CD8-positive, alpha-beta T cell (primary cell): ENCODE measurements at regions of chr6 and their contacts with region 1.

Region 1: DNA sequence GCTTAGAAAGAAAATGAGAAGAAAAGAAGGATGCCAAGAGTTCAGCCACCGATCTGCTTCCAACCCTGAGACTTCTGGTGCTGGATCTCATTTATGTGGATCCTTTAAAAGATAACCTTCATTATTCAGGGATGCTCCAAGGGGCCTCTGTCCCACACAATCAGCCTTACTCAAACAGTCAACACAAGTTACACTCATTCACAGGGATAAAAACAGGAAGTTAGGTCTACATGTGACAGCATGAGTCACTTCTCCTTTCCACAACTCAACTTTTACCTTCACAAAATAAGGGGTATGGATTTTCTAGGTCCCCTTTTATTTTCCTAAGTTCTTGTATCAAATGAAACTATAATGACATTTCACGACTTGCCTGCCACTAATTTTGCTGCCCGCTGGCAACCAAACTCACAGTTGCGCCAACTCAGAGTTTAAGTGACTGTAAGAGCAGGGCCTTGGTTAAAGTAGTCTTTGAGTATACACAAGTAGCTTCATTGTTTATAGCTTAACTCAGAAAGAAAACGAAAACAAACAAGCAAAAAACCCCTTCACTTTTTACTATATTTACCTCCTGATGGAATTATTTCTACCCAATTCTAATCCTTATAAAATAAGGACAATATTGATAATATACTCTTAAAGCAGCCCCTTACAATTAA is 278.8 kb upstream of the RUNX2 start:
- DNase-seq: peak in 1 of 9 experiments; percentile 27
- ATAC-seq: no peak
- H3K4me3 ChIP-seq: no peak overlapping the region
- H3K4me3 Mint-ChIP-seq: no peak overlapping the region
- H3K27ac ChIP-seq: no peak overlapping the region
- H3K27ac Mint-ChIP-seq: peak overlapping the region; percentile 53
- H3K4me1 ChIP-seq: peaks cover 6% of the 10 kb centered on the region
- H3K4me1 Mint-ChIP-seq: peaks cover 42% of the 10 kb centered on the region
- H3K27me3 ChIP-seq: no peaks in the 10 kb centered on the region
- H3K27me3 Mint-ChIP-seq: no peaks in the 10 kb centered on the region
- CTCF ChIP-seq: no peak

Region 2: DNA sequence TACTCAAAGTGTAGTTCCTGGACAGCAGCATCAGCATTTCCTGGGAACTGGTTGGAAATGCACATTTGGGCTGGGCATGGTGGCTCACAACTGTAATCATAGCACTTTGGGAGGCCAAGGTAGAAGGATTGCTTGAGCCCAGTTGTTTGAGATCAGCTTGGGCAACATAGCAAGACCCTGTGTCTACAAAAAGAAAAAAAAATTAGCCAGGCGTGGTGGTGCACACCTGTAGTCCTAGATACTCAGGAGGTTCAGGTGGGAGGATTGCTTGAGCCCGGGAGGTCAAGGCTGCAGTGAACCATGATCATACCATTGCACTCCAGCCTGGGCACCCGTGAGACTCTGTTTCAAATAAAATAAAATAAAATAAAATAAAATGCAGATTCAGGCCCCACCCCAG is 505.7 kb before region 1 on chr6:
- CTCF ChIA-PET with region 1: no interaction called
- POLR2A ChIA-PET with region 1: no interaction called
- intact Hi-C with region 1: no loop called
- DNase-seq: no peak
- ATAC-seq: no peak
- H3K4me3 ChIP-seq: no peak overlapping the region
- H3K4me3 Mint-ChIP-seq: no peak overlapping the region
- H3K27ac ChIP-seq: no peak overlapping the region
- H3K27ac Mint-ChIP-seq: no peak overlapping the region
- H3K4me1 ChIP-seq: no peaks in the 10 kb centered on the region
- H3K4me1 Mint-ChIP-seq: no peaks in the 10 kb centered on the region
- H3K27me3 ChIP-seq: no peaks in the 10 kb centered on the region
- H3K27me3 Mint-ChIP-seq: no peaks in the 10 kb centered on the region
- CTCF ChIP-seq: no peak

Region 3: GRCh38 chr6:44932651-44933091 is 116.6 kb before region 1 on chr6:
- CTCF ChIA-PET with region 1: no interaction called
- POLR2A ChIA-PET with region 1: no interaction called
- intact Hi-C with region 1: no loop called
- DNase-seq: peak; percentile 28 to 87 (median 63)
- ATAC-seq: peak; percentile 79
- H3K4me3 ChIP-seq: peak overlapping the region; percentile 33 to 53
- H3K4me3 Mint-ChIP-seq: peak overlapping the region; percentile 87
- H3K27ac ChIP-seq: peak overlapping the region; percentile 74 to 81
- H3K27ac Mint-ChIP-seq: peak overlapping the region; percentile 98
- H3K4me1 ChIP-seq: peaks cover 45% of the 10 kb centered on the region
- H3K4me1 Mint-ChIP-seq: peaks cover 59% of the 10 kb centered on the region
- H3K27me3 ChIP-seq: no peaks in the 10 kb centered on the region
- H3K27me3 Mint-ChIP-seq: no peaks in the 10 kb centered on the region
- CTCF ChIP-seq: no peak

Region 4: GRCh38 chr6:45009576-45009975 is 39.7 kb before region 1 on chr6:
- CTCF ChIA-PET with region 1: no interaction called
- POLR2A ChIA-PET with region 1: no interaction called
- intact Hi-C with region 1: loop called (anchors 5 kb)
- DNase-seq: no peak
- ATAC-seq: no peak
- H3K4me3 ChIP-seq: no peak overlapping the region
- H3K4me3 Mint-ChIP-seq: no peak overlapping the region
- H3K27ac ChIP-seq: no peak overlapping the region
- H3K27ac Mint-ChIP-seq: no peak overlapping the region
- H3K4me1 ChIP-seq: no peaks in the 10 kb centered on the region
- H3K4me1 Mint-ChIP-seq: no peaks in the 10 kb centered on the region
- H3K27me3 ChIP-seq: no peaks in the 10 kb centered on the region
- H3K27me3 Mint-ChIP-seq: no peaks in the 10 kb centered on the region
- CTCF ChIP-seq: no peak

Region 5: DNA sequence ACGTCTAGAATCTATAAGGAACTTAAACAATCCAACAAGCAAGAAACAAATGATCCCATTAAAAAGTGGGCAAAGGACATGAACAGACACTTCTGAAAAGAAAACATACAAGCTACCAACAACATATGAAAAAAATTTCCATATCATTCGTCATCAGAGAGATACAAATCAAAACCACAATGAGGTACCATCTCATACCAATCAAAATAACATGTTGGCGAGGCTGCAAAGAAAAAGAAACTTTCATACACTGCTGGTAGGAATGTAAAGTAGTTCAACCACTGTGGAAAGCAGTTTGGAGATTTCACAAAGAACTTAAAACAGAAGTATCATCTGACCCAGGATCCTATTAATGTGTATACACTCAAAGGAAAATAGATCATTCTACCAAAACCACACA is 34.9 kb after region 1 on chr6:
- CTCF ChIA-PET with region 1: no interaction called
- POLR2A ChIA-PET with region 1: no interaction called
- intact Hi-C with region 1: loop called in 1 of 2 experiments (anchors 5 kb)
- DNase-seq: peak in 2 of 9 experiments; percentile 5 to 7
- ATAC-seq: no peak
- H3K4me3 ChIP-seq: no peak overlapping the region
- H3K4me3 Mint-ChIP-seq: no peak overlapping the region
- H3K27ac ChIP-seq: no peak overlapping the region
- H3K27ac Mint-ChIP-seq: no peak overlapping the region
- H3K4me1 ChIP-seq: no peaks in the 10 kb centered on the region
- H3K4me1 Mint-ChIP-seq: peaks cover 12% of the 10 kb centered on the region
- H3K27me3 ChIP-seq: no peaks in the 10 kb centered on the region
- H3K27me3 Mint-ChIP-seq: no peaks in the 10 kb centered on the region
- CTCF ChIP-seq: no peak